HepG2 (cell line): ENCODE measurements at regions of chr11 and their contacts with region 1.

Region 1: GRCh38 chr11:111299101-111300026 is 1.0 kb downstream of the POU2AF3 start:
- DNase-seq: peak; percentile 46
- ATAC-seq: peak; percentile 94
- H3K4me3 ChIP-seq: peak overlapping the region; percentile 62 to 78 (median 72)
- H3K27ac ChIP-seq: peak overlapping the region; percentile 81
- H3K4me1 ChIP-seq: peaks cover 68% of the 10 kb centered on the region
- H3K27me3 ChIP-seq: no peaks in the 10 kb centered on the region
- CTCF ChIP-seq: peak; percentile 80
- EP300 ChIP-seq: no peak
- POLR2A ChIP-seq: peak; percentile 61 to 66; a peak in 3 of 4 replicates
- RAD21 ChIP-seq: peak; percentile 92

Region 2: DNA sequence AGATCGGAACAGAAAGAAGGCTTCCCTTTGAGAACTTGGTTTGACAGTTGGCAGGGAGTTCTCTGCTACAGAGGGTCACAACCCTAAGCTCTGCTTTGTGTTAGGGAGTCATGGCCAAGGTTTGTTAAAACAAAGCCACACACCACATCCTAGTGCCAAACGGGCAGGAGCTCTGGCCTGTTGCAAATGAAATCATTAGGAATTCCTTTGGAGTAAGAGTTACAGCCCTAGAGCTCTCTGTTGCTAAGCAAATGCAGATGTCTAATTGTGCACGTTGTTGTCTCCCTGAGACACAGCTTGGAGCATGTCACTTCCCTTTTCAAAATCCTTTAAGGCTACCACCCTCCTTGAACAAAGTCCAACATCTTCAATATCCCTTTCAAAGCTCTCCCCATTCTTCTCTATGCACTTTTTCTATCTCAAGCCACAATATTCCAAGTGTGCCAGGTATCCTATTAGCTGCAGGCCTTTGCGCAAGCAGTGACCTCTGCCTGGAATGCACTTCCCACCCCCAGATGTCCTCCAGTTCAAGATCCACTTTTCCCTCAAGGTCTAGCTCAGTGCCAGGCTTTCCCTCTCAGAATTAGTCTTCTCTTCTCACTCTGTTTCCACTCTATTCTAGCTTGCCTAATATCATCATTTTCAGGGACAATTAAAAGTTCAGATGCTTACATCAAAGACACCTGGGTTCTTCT is 307.6 kb before region 1 on chr11:
- CTCF ChIA-PET with region 1: no interaction called
- POLR2A ChIA-PET with region 1: no interaction called
- in situ Hi-C with region 1: no loop called
- intact Hi-C with region 1: no loop called
- DNase-seq: no peak
- ATAC-seq: no peak
- H3K4me3 ChIP-seq: no peak overlapping the region
- H3K27ac ChIP-seq: no peak overlapping the region
- H3K4me1 ChIP-seq: no peaks in the 10 kb centered on the region
- H3K27me3 ChIP-seq: no peaks in the 10 kb centered on the region
- CTCF ChIP-seq: no peak
- EP300 ChIP-seq: no peak
- POLR2A ChIP-seq: no peak
- RAD21 ChIP-seq: no peak

Region 3: GRCh38 chr11:111177037-111177871 is 122.1 kb before region 1 on chr11:
- CTCF ChIA-PET with region 1: no interaction called
- POLR2A ChIA-PET with region 1: no interaction called
- in situ Hi-C with region 1: no loop called
- intact Hi-C with region 1: no loop called
- DNase-seq: no peak
- ATAC-seq: no peak
- H3K4me3 ChIP-seq: no peak overlapping the region
- H3K27ac ChIP-seq: no peak overlapping the region
- H3K4me1 ChIP-seq: no peaks in the 10 kb centered on the region
- H3K27me3 ChIP-seq: peaks cover 0 to 19% of the 10 kb centered on the region in 2 experiments; a peak in 4 of 5 replicates
- CTCF ChIP-seq: no peak
- EP300 ChIP-seq: no peak
- POLR2A ChIP-seq: no peak
- RAD21 ChIP-seq: no peak

Region 4: DNA sequence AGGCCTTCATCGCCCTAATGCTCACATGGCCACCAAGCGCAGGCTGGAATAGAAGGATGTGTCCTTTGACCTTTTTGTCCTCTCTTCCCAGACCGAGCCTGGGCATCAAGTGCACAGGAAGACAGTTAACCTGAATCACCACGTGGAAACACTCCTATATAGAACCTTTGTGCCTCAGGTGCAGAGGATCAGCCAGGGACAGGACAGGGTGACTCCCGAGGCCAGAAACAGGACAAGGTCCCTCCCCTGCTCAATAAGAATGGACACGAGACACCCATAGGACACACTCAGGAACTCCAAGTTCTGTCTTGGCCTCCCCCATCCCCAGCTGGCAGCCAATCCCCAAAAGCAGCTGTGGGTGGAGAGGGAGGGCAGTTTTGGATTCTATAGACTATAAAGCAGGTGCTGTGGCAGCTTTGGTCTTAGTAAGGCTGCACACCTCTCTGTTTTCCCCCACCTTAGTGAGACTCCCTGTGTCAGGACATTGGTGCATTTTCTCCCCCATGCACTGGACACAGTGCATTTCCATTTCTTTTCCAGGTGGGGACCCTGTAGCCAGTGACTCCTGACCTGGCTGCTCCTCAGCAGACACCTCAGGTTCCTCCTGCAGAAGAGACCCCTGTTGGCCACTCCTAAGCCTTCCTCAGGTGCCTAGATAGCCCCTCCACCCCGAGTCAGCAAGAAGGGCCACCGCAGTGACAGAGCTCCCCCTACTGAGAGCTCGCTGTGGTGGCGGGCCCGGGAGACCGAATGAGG is 123.3 kb after region 1 on chr11:
- CTCF ChIA-PET with region 1: interaction called, 51 read pairs
- POLR2A ChIA-PET with region 1: interaction called, 15 read pairs
- in situ Hi-C with region 1: no loop called
- intact Hi-C with region 1: loop called (anchors 1 kb)
- DNase-seq: peak; percentile 82
- ATAC-seq: peak; percentile 98
- H3K4me3 ChIP-seq: no peak overlapping the region
- H3K27ac ChIP-seq: peak overlapping the region; percentile 18
- H3K4me1 ChIP-seq: peaks cover 64% of the 10 kb centered on the region
- H3K27me3 ChIP-seq: no peaks in the 10 kb centered on the region
- CTCF ChIP-seq: peak; percentile 100
- EP300 ChIP-seq: peak; percentile 52 to 66; a peak in 2 of 4 replicates
- POLR2A ChIP-seq: no peak
- RAD21 ChIP-seq: peak; percentile 100